Naive thymus-derived CD4-positive, alpha-beta T cell (primary cell): ENCODE measurements at regions of chr4 and their contacts with region 1.

Region 1: DNA sequence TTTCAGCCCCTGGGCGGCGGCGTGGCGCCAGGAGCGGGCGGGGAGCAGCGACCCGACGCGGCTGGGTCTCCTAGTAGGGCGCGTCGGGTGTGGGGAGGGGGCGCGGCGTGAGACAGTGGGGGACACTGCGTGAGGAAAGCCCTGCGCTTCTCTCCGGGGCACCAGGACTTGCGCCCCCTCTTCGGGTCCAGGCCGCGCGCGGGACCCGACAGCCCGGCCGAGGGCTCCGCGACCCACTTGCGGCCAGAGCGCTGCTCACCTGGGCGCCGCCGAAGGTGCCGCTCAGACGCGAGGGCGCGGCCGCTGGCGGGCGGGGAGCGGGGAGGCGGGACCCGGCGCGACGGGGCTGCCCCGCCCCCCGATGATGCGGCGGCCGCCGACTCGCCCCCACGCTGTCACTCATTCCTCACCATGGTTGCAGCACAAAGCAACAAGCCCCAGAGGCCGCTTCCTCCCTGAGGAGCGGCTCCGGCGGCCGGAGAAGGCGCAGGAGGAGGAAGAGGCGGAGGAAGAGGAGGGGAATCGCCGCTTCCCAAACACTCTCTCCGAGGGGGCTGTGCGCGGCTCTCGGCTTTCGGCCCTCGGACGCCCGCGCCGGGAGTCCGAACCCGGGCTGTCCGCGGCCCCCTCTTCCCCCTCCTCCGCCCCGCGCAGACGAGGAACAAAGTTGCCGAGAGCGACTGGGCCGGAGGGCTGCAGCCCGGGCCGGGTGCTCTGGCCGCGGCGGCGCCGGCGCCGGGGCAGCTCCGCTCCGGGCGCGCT is at the start of gene RAPGEF2:
- DNase-seq: peak; percentile 82 to 89 (median 87)
- ATAC-seq: peak; percentile 94
- H3K4me3 ChIP-seq: peak within 1 kb of the TSS; percentile 63
- H3K4me3 Mint-ChIP-seq: peak within 1 kb of the TSS; percentile 82 to 92 (median 88)
- H3K27ac ChIP-seq: peak within 1 kb of the TSS; percentile 83
- H3K27ac Mint-ChIP-seq: peak within 1 kb of the TSS; percentile 66 to 93 (median 89)
- H3K4me1 ChIP-seq: peaks cover 8 to 20% of the 10 kb centered on the region in 2 donors
- H3K4me1 Mint-ChIP-seq: peaks cover 27 to 50% (median 38%) of the 10 kb centered on the region in 7 donors
- H3K27me3 ChIP-seq: no peaks in the 10 kb centered on the region
- H3K27me3 Mint-ChIP-seq: peaks cover 0 to 8% (median 0%) of the 10 kb centered on the region in 5 donors
- total RNA-seq, gene RAPGEF2: 19.1 to 35.2 (median 21.9) TPM

Region 2: GRCh38 chr4:158671915-158672806 is 430.6 kb before region 1 on chr4 and contains the start of gene ETFDH:
- CTCF ChIA-PET with region 1: no interaction called
- POLR2A ChIA-PET with region 1: no interaction called
- intact Hi-C with region 1: loop called (anchors 1 kb)
- DNase-seq: peak; percentile 91 to 99 (median 98)
- ATAC-seq: peak; percentile 88
- H3K4me3 ChIP-seq: peak within 1 kb of the TSS; percentile 80
- H3K4me3 Mint-ChIP-seq: peak within 1 kb of the TSS; percentile 88 to 99 (median 96)
- H3K27ac ChIP-seq: peak within 1 kb of the TSS; percentile 93
- H3K27ac Mint-ChIP-seq: peak within 1 kb of the TSS; percentile 91 to 99 (median 97)
- H3K4me1 ChIP-seq: peaks cover 13 to 16% of the 10 kb centered on the region in 2 donors
- H3K4me1 Mint-ChIP-seq: peaks cover 6 to 43% (median 35%) of the 10 kb centered on the region in 7 donors
- H3K27me3 ChIP-seq: no peaks in the 10 kb centered on the region
- H3K27me3 Mint-ChIP-seq: peaks cover 0 to 3% (median 0%) of the 10 kb centered on the region in 5 donors
- total RNA-seq, gene ETFDH: 12.5 to 25.8 (median 17.5) TPM

Region 3: DNA sequence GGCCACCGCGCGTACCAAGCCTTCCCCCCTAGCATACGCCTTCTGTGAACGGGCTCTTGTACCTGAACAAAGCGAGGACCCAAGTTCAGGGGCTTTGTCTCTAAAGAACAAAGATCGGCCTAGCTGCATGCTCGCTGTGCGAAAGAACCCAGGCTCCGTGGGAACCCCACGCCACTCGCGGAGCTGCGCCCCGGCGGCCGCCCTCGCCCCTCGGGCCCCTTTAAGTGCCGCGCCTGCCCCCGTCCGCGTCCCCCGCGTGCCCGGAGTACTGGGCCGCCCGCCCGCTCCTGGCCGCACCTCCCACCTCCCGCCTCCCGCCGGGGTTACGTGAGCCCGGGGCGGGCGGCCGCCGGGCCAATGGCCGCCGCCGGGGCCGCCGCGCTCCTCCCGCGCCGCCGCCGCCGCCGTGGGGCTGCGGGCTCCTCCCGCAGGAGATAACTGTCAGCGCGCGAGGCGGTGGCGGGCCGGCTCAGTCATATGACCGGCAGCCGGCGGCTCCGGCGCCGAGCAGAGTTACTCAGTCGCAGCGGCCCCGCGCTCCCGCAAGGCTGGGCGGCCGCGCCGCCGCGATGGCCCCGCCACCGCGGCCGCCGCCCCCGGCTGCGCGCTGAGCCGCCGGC is 334.1 kb before region 1 on chr4 and contains the start of gene FNIP2:
- CTCF ChIA-PET with region 1: no interaction called
- POLR2A ChIA-PET with region 1: interaction called, 3 read pairs
- intact Hi-C with region 1: loop called (anchors 1 to 2 kb)
- DNase-seq: peak; percentile 69 to 83 (median 70)
- ATAC-seq: peak; percentile 90
- H3K4me3 ChIP-seq: peak within 1 kb of the TSS; percentile 68
- H3K4me3 Mint-ChIP-seq: peak within 1 kb of the TSS; percentile 92 to 100 (median 99)
- H3K27ac ChIP-seq: peak within 1 kb of the TSS; percentile 80
- H3K27ac Mint-ChIP-seq: peak within 1 kb of the TSS; percentile 90 to 99 (median 98)
- H3K4me1 ChIP-seq: peaks cover 0 to 8% of the 10 kb centered on the region in 2 donors
- H3K4me1 Mint-ChIP-seq: peaks cover 21 to 52% (median 43%) of the 10 kb centered on the region in 7 donors
- H3K27me3 ChIP-seq: no peaks in the 10 kb centered on the region
- H3K27me3 Mint-ChIP-seq: peaks cover 0 to 5% (median 0%) of the 10 kb centered on the region in 5 donors
- total RNA-seq, gene FNIP2: 9.8 to 19.5 (median 11.5) TPM

Region 4: DNA sequence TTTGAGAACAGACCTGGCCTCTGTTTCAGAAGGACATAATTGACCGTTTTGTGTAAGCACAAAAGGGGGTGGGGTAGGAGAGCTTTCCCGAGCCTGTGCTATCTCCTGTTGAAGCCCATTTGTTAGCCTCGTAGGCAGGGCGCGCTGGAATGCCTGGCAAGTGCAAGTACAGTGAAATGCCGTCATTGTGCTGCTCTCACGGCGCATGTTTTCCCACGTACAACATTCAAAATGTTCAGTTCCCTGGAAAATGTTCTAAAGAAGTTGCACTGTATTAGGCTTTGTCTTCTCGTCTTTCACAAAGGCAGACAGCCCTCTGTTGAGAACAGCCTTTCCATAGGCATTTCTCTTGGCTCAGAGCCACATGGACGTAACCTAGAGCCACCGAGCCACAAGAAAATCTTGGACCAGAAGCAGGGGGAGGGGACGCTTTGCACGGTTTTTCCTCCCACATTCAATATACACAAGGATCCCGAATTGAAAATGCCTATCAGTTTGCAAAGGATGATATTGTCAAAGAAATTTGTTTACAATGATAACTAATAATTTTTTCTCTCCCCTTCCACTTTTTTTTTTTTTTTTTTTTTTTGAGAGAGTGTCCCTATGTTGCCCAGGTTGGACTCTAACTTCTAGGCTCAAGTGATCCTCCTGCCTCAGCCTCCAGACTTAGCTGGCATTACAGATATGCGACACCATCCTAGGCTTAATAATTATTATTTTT is 54.5 kb before region 1 on chr4:
- CTCF ChIA-PET with region 1: no interaction called
- POLR2A ChIA-PET with region 1: no interaction called
- intact Hi-C with region 1: loop called in 1 of 2 experiments (anchors 2 kb)
- DNase-seq: no peak
- ATAC-seq: no peak
- H3K4me3 ChIP-seq: no peak overlapping the region
- H3K4me3 Mint-ChIP-seq: no peak overlapping the region
- H3K27ac ChIP-seq: no peak overlapping the region
- H3K27ac Mint-ChIP-seq: no peak overlapping the region
- H3K4me1 ChIP-seq: no peaks in the 10 kb centered on the region
- H3K4me1 Mint-ChIP-seq: peaks cover 0 to 38% (median 0%) of the 10 kb centered on the region in 7 donors
- H3K27me3 ChIP-seq: no peaks in the 10 kb centered on the region
- H3K27me3 Mint-ChIP-seq: peaks cover 2 to 18% (median 5%) of the 10 kb centered on the region in 5 donors

Region 5: DNA sequence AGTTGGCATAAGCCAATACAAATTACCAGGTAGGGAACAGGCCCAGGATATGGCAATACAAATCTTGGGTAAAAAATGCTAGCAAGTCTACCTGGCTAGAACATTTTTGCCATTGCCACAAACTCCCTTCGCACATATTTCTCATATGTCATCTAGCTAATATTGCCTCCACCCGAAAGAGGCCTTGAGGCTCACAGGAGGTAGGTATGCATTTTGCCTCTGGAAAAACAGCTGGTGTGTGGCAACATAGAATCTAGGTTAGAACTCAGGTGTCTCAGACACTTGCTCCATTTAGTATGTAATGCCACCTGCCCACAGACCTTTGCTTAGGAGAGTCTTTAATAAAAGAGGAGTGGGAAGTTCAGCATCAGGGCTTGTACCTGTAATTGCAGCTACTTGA is 16.2 kb before region 1 on chr4:
- CTCF ChIA-PET with region 1: no interaction called
- POLR2A ChIA-PET with region 1: no interaction called
- intact Hi-C with region 1: no loop called
- DNase-seq: no peak
- ATAC-seq: no peak
- H3K4me3 ChIP-seq: no peak overlapping the region
- H3K4me3 Mint-ChIP-seq: no peak overlapping the region
- H3K27ac ChIP-seq: no peak overlapping the region
- H3K27ac Mint-ChIP-seq: no peak overlapping the region
- H3K4me1 ChIP-seq: no peaks in the 10 kb centered on the region
- H3K4me1 Mint-ChIP-seq: no peaks in the 10 kb centered on the region
- H3K27me3 ChIP-seq: no peaks in the 10 kb centered on the region
- H3K27me3 Mint-ChIP-seq: peaks cover 0 to 6% (median 0%) of the 10 kb centered on the region in 5 donors

Region 6: GRCh38 chr4:159117968-159118367 is 15.2 kb after region 1 on chr4:
- CTCF ChIA-PET with region 1: no interaction called
- POLR2A ChIA-PET with region 1: interaction called, 4 read pairs
- intact Hi-C with region 1: loop called in 1 of 2 experiments (anchors 1 kb)
- DNase-seq: peak in 1 of 9 donors; percentile 4
- ATAC-seq: peak; percentile 82
- H3K4me3 ChIP-seq: no peak overlapping the region
- H3K4me3 Mint-ChIP-seq: peak overlapping the region in 1 of 10 donors; percentile 2
- H3K27ac ChIP-seq: no peak overlapping the region
- H3K27ac Mint-ChIP-seq: peak overlapping the region in 3 of 9 donors; percentile 29 to 56 (median 55)
- H3K4me1 ChIP-seq: peaks cover 6 to 8% of the 10 kb centered on the region in 2 donors
- H3K4me1 Mint-ChIP-seq: peaks cover 10 to 32% (median 16%) of the 10 kb centered on the region in 7 donors
- H3K27me3 ChIP-seq: no peaks in the 10 kb centered on the region
- H3K27me3 Mint-ChIP-seq: no peaks in the 10 kb centered on the region

Region 7: DNA sequence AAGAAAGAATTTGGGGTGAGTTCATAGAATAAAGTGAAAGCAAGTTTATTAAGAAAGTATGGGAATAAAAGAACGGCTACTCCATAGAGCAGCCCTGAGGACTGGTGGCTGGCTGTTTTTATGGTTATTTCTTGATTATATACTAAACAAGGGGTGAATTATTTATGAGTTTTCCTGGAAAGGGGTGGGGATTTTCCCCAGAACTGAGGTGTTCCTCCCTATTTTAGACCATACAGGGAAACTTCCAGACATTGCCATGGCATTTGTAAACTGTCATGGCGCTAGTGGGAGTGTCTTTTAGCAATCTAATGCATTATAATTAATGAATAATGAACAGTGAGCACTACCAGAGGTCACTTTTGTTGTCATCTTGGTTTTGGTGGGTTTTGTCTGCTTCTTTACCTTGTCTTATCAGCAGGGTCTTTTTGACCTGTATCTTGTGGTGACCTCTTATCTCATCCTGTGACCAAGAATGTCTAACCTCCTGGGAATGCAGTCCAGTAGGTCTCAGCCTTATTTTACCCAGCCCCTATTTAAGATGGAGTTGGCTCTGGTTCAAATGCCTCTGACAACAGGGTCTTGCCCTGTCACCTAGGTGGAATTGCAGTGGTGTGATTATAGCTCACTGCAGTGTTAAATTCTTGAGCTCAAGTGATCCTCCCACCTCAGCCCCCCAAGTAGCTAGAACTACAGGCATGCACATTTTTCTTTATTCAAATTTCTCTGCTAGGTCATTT is 27.2 kb after region 1 on chr4:
- CTCF ChIA-PET with region 1: no interaction called
- POLR2A ChIA-PET with region 1: no interaction called
- intact Hi-C with region 1: no loop called
- DNase-seq: no peak
- ATAC-seq: no peak
- H3K4me3 ChIP-seq: no peak overlapping the region
- H3K4me3 Mint-ChIP-seq: no peak overlapping the region
- H3K27ac ChIP-seq: no peak overlapping the region
- H3K27ac Mint-ChIP-seq: no peak overlapping the region
- H3K4me1 ChIP-seq: no peaks in the 10 kb centered on the region
- H3K4me1 Mint-ChIP-seq: peaks cover 0 to 31% (median 7%) of the 10 kb centered on the region in 7 donors
- H3K27me3 ChIP-seq: no peaks in the 10 kb centered on the region
- H3K27me3 Mint-ChIP-seq: no peaks in the 10 kb centered on the region